Caco-2 (cell line): ENCODE measurements at regions of chr7 and their contacts with region 1.

Region 1: DNA sequence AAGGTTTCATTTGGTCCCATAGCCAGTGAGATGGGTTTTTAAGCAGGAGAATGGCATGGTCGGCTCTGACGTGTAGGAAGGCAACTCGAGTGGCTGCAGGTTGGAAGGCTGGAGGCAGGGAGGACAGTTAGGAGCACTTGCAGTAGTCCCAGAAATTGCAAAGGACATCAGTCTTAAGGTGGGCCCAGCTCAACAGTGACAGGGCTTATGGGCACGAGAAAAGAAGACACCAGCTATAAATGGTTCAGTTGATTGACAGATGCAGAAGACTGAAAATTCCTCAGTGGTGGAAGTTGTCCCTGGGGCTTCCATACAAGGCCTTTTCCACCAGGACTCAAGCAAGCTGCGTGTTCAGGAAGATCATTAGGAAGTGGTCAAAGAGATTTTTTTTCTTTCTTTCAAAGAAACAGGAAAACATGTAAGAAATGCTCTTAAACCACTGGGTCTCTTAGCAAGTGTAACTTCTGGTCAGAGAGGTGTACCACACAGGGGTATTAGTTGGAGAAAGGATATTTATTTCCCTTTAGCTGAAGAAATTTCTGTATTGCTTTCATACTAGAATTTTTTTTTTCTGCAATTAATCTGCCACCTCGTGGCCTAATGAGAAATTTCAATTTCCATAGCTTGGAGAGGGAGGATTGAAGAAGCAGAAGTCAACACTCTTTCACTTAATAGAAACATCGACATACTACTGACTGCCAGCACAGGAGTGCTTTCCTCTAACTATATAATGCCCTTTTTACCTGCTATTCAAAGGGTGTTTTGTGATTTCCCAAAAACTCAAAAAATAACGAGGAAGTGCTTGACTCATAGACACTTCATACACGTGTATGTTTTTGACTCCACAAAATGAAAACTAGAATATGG is 177.4 kb upstream of the NAMPT start:
- DNase-seq: peak in 1 of 2 experiments; percentile 41
- H3K4me3 ChIP-seq: no peak overlapping the region
- H3K4me3 Mint-ChIP-seq: peak overlapping the region; percentile 25
- H3K27ac Mint-ChIP-seq: peak overlapping the region; percentile 89
- H3K4me1 ChIP-seq: peaks cover 39% of the 10 kb centered on the region
- H3K4me1 Mint-ChIP-seq: peaks cover 38% of the 10 kb centered on the region
- H3K27me3 ChIP-seq: no peaks in the 10 kb centered on the region
- H3K27me3 Mint-ChIP-seq: no peaks in the 10 kb centered on the region
- CTCF ChIP-seq: peak; percentile 39 to 54

Region 2: DNA sequence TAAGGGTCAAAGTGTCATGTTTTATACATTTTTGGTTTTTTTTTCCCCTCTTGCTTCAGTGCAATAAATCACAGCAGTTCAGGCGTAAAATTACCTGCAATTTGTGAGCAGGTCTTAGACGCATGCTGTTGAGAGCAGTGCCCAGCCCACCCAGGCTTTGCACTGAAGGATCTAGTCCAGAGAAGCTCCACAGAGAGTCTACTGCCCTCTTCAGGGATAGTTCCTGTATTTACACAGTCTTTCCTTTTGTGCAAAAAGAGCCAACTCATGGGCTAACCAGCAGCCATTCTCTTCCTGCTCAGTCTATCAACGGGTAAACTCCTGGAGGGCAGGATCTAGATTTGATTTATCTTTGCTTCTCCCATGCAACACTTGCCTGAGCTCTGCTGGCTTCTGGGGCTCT is 95.2 kb before region 1 on chr7:
- CTCF ChIA-PET with region 1: interaction called, 4 read pairs
- POLR2A ChIA-PET with region 1: no interaction called
- intact Hi-C with region 1: loop called (anchors 5 kb)
- DNase-seq: no peak
- H3K4me3 ChIP-seq: no peak overlapping the region
- H3K4me3 Mint-ChIP-seq: no peak overlapping the region
- H3K27ac Mint-ChIP-seq: no peak overlapping the region
- H3K4me1 ChIP-seq: peaks cover 9% of the 10 kb centered on the region
- H3K4me1 Mint-ChIP-seq: no peaks in the 10 kb centered on the region
- H3K27me3 ChIP-seq: no peaks in the 10 kb centered on the region
- H3K27me3 Mint-ChIP-seq: no peaks in the 10 kb centered on the region
- CTCF ChIP-seq: no peak

Region 3: GRCh38 chr7:106384371-106384770 is 77.9 kb before region 1 on chr7:
- CTCF ChIA-PET with region 1: no interaction called
- POLR2A ChIA-PET with region 1: no interaction called
- intact Hi-C with region 1: loop called (anchors 5 kb)
- DNase-seq: no peak
- H3K4me3 ChIP-seq: no peak overlapping the region
- H3K4me3 Mint-ChIP-seq: no peak overlapping the region
- H3K27ac Mint-ChIP-seq: no peak overlapping the region
- H3K4me1 ChIP-seq: peaks cover 13% of the 10 kb centered on the region
- H3K4me1 Mint-ChIP-seq: peaks cover 16% of the 10 kb centered on the region
- H3K27me3 ChIP-seq: no peaks in the 10 kb centered on the region
- H3K27me3 Mint-ChIP-seq: no peaks in the 10 kb centered on the region
- CTCF ChIP-seq: no peak

Region 4: GRCh38 chr7:106418094-106418493 is 44.1 kb before region 1 on chr7:
- CTCF ChIA-PET with region 1: no interaction called
- POLR2A ChIA-PET with region 1: no interaction called
- intact Hi-C with region 1: no loop called
- DNase-seq: no peak
- H3K4me3 ChIP-seq: no peak overlapping the region
- H3K4me3 Mint-ChIP-seq: no peak overlapping the region
- H3K27ac Mint-ChIP-seq: no peak overlapping the region
- H3K4me1 ChIP-seq: no peaks in the 10 kb centered on the region
- H3K4me1 Mint-ChIP-seq: peaks cover 6% of the 10 kb centered on the region
- H3K27me3 ChIP-seq: no peaks in the 10 kb centered on the region
- H3K27me3 Mint-ChIP-seq: no peaks in the 10 kb centered on the region
- CTCF ChIP-seq: no peak

Region 5: DNA sequence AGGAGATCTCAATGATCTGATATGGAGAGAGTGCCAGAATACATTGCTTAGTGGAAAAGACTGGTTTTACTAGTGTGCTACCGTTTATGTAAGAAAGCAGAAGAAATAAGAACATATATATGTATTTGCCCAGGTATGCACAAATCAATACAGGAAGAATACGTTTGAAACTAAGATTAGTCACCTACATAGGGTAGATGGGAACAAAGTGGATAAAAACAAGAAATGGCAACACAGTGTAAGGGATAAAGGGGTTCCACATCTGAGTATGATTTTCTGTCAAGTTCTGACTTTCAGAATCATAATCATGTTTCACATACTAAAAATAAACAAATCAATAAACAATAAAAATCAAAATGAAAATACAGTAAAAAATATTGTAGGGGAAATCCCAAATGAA is 28.8 kb before region 1 on chr7:
- CTCF ChIA-PET with region 1: no interaction called
- POLR2A ChIA-PET with region 1: no interaction called
- intact Hi-C with region 1: no loop called
- DNase-seq: no peak
- H3K4me3 ChIP-seq: no peak overlapping the region
- H3K4me3 Mint-ChIP-seq: no peak overlapping the region
- H3K27ac Mint-ChIP-seq: no peak overlapping the region
- H3K4me1 ChIP-seq: peaks cover 9% of the 10 kb centered on the region
- H3K4me1 Mint-ChIP-seq: peaks cover 13% of the 10 kb centered on the region
- H3K27me3 ChIP-seq: no peaks in the 10 kb centered on the region
- H3K27me3 Mint-ChIP-seq: peaks cover 2% of the 10 kb centered on the region
- CTCF ChIP-seq: no peak